Endothelial cell of umbilical vein (primary cell): ENCODE measurements at regions of chr5 and their contacts with region 1.

Region 1: GRCh38 chr5:38809388-38810359 is 36.1 kb upstream of the OSMR start:
- DNase-seq: peak; percentile 87
- H3K4me3 ChIP-seq: no peak overlapping the region
- H3K27ac ChIP-seq: no peak overlapping the region
- H3K4me1 ChIP-seq: peaks cover 31% of the 10 kb centered on the region
- H3K27me3 ChIP-seq: no peaks in the 10 kb centered on the region
- CTCF ChIP-seq: peak; percentile 81 to 83
- POLR2A ChIP-seq: no peak

Region 2: GRCh38 chr5:38382898-38383297 is 426.8 kb before region 1 on chr5:
- CTCF ChIA-PET with region 1: interaction called, 184 read pairs
- POLR2A ChIA-PET with region 1: no interaction called
- dilution Hi-C with region 1: no loop called
- intact Hi-C with region 1: loop called (anchors 1 kb)
- DNase-seq: peak; percentile 72
- H3K4me3 ChIP-seq: no peak overlapping the region
- H3K27ac ChIP-seq: no peak overlapping the region
- H3K4me1 ChIP-seq: no peaks in the 10 kb centered on the region
- H3K27me3 ChIP-seq: peaks cover under 1 to 2% of the 10 kb centered on the region in 2 experiments
- CTCF ChIP-seq: peak; percentile 80 to 81
- POLR2A ChIP-seq: no peak

Region 3: DNA sequence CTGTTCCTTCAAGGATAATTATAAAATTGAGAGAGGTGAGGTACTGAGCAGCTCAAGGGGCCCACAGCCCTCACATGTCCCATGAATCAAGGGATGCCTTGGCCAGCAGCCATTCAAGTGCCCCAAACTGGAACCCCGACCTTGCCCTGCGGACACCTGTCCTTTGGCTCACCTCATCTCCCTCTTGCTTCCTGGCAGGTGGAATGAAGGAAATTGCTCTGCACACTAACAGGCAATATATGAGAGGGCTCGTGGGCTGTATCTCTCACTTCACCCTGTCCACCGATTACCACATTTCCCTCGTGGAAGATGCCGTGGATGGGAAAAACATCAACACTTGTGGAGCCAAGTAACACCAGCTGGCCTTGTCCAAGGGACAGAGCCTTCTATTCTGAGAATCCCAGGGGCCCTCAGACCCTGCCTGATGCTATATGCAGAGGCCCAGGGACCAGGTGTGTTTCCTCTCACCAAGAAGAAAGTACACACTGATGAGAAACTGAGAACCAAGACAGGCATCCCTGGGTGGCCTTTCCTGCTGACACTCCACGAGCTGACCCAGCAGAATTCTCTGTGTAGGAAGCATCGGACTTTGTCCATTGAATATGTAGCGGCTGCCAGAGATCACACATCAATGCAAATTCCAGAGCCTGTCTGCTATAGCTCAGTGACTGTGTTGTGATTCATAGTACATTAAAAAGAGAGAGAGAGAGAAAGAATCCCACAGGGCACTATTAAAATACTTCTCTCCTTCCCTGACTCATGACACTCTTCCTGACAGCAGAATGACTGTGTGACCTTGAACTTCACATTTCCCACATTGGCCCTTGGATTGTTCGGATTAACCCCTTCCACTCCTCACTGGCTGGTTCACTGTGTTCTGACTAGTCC is 345.8 kb before region 1 on chr5:
- CTCF ChIA-PET with region 1: interaction called, 29 read pairs
- POLR2A ChIA-PET with region 1: no interaction called
- dilution Hi-C with region 1: no loop called
- intact Hi-C with region 1: loop called (anchors 1 kb)
- DNase-seq: peak; percentile 89
- H3K4me3 ChIP-seq: no peak overlapping the region
- H3K27ac ChIP-seq: peak overlapping the region; percentile 90
- H3K4me1 ChIP-seq: peaks cover 64% of the 10 kb centered on the region
- H3K27me3 ChIP-seq: no peaks in the 10 kb centered on the region
- CTCF ChIP-seq: no peak
- POLR2A ChIP-seq: peak; percentile 73

Region 4: DNA sequence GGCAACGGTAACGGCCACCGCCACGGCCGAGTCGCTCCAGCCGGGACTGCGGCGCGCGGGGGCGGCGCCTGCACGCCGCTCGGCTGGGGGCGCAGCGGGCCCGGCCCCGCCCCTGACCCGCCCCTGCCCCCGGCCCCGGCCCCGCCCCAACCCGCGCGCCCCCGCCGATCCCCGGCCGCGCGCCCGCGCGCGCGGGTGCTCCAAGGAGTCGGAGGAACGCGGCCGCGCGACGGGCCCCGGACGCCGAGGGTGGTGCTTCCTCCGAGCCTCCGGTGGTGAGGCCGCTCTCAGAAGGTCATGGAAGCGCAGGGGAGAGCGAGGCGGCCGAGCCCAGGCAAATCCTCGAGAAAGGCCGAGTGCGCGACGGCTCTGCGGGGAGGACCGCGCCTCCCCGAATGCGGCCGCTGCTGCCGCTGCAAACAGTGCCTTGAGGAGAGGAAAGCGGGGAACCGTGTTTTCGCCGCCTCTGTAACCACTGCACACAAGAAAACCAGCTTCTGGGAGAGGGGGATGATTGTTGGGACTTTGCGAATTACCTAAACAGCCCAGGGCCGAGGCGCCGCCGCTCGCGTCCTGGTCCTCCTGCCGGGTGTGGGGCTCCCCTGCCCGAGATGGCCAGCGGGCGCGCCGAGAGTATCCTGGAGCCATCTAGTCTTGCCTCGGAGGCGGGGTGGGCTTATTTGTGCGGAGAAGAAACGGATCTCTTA is 252.9 kb before region 1 on chr5 and contains the start of gene LIFR:
- CTCF ChIA-PET with region 1: interaction called, 21 read pairs
- POLR2A ChIA-PET with region 1: no interaction called
- dilution Hi-C with region 1: no loop called
- intact Hi-C with region 1: loop called (anchors 1 kb)
- DNase-seq: peak; percentile 80
- H3K4me3 ChIP-seq: peak within 1 kb of the TSS; percentile 82 to 86 (median 83)
- H3K27ac ChIP-seq: peak within 1 kb of the TSS; percentile 68
- H3K4me1 ChIP-seq: peaks cover 21% of the 10 kb centered on the region
- H3K27me3 ChIP-seq: peaks cover 0 to 2% of the 10 kb centered on the region in 2 experiments
- CTCF ChIP-seq: peak in 1 of 2 donors; percentile 3
- POLR2A ChIP-seq: peak; percentile 66
- total RNA-seq, gene LIFR: 34.9 and 36.4 TPM in 2 replicates

Region 5: DNA sequence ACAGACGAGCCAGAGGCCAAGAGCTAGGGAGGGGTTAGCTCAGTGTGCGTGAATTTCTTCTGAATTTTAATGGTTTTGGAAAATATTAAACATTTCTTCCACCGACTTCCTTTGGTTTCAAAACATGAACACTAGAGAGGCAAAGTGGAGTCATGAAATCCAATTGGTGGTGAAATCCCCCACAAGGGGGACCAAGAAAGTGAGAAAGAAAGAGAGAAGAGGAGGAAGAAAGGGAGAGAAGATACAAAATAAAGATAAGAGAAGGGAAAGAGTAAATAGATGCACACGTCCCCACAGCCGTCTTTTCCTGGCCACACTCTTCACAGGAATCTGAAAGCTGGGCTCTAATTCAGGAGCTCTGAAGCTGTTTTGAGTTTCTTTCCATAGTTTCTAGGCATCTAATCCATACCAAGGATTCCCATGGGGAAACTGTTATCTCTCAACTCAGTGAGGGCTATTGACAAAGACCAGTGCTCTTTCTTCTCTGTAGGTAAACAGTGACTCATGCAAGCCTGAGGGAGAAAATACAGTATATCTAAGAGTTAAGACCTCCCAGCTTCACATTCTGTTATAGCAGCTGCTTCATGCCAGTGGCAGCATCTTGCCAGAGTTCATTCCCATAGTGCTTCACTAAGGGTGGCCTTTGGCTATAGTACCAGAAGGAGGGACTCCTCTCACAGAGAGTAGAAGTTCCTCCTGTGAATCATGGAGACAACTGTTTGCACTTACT is 137.4 kb before region 1 on chr5:
- CTCF ChIA-PET with region 1: interaction called, 65 read pairs
- POLR2A ChIA-PET with region 1: no interaction called
- dilution Hi-C with region 1: no loop called
- intact Hi-C with region 1: loop called (anchors 1 kb)
- DNase-seq: no peak
- H3K4me3 ChIP-seq: no peak overlapping the region
- H3K27ac ChIP-seq: no peak overlapping the region
- H3K4me1 ChIP-seq: no peaks in the 10 kb centered on the region
- H3K27me3 ChIP-seq: peaks cover 0 to 3% of the 10 kb centered on the region in 2 experiments
- CTCF ChIP-seq: no peak
- POLR2A ChIP-seq: no peak

Region 6: DNA sequence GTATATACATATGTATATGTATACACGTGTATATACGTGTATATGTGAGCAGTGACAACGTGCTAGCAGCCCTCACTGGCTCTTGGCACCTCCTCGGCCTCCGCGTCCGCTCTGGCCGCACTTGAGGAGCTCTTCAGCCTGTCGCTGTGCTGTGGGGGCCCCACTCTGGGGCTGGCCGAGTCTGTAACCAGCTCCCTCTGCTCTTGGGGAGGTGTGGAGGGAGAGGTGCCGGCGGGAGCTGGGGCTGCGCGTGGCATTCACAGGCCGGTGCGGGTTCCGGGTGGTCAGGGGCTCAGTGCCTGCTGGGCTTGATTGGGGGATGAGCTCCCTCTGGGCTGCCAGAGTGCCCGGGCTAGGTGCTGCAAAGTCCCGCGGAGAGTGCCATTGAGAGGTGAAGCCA is 12.0 kb after region 1 on chr5:
- CTCF ChIA-PET with region 1: interaction called, 15 read pairs
- POLR2A ChIA-PET with region 1: no interaction called
- dilution Hi-C with region 1: no loop called
- intact Hi-C with region 1: no loop called
- DNase-seq: no peak
- H3K4me3 ChIP-seq: no peak overlapping the region
- H3K27ac ChIP-seq: no peak overlapping the region
- H3K4me1 ChIP-seq: peaks cover 4% of the 10 kb centered on the region
- H3K27me3 ChIP-seq: no peaks in the 10 kb centered on the region
- CTCF ChIP-seq: no peak
- POLR2A ChIP-seq: no peak